ENCODE measurements at regions of chr12 and their contacts with region 1.

Region 1: DNA sequence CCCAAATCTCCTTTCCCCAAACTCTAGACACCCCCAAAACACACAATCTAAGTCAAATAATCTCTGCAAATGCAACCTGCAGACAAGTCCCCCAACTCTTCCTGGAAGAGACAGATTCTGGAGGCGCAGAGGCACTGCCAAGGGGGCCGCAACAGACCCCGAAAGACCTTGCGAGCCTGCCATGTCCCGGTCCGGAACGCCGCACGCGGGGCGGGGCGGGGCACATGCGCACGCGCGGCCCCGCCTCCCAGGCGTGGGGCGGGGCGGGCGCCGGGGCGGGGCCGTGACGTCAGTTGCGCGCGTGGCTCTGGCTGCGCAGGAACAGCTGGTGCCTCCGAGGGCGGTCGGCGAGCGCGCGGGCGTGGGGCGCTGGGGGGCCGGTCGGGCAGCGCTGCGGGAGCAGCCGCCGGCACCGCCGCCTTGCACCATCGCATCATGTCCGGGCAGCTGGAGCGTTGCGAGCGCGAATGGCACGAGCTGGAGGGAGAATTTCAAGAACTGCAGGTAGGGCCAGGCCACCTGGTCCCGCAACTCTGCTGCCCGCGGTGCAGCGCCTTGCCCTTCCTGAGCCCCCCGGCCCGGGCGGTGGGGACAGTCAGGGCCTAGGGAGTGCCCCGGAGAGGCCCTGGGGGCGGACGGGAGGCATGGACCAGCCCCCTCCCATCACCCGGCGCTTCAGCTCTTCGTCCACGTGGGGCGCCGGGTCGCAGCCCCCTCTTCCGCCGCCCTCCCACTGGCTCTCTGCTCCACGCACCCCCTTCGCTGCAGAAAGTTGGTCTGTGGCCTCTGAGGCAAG is at the start of gene TMEM120B:
- DNase-seq: peak; percentile 80 to 89
- ATAC-seq: peak; percentile 91 to 98 (median 95)
- H3K4me3 ChIP-seq: peak within 1 kb of the TSS; percentile 71 to 98 (median 94)
- H3K27ac ChIP-seq: peak within 1 kb of the TSS; percentile 85 to 96 (median 91)
- H3K4me1 ChIP-seq: peaks cover 8 to 27% (median 17%) of the 10 kb centered on the region in 9 donors
- H3K27me3 ChIP-seq: no peaks in the 10 kb centered on the region
- CTCF ChIP-seq: no peak
- total RNA-seq, gene TMEM120B: 5.3 to 12.3 (median 7.3) TPM

Region 2: DNA sequence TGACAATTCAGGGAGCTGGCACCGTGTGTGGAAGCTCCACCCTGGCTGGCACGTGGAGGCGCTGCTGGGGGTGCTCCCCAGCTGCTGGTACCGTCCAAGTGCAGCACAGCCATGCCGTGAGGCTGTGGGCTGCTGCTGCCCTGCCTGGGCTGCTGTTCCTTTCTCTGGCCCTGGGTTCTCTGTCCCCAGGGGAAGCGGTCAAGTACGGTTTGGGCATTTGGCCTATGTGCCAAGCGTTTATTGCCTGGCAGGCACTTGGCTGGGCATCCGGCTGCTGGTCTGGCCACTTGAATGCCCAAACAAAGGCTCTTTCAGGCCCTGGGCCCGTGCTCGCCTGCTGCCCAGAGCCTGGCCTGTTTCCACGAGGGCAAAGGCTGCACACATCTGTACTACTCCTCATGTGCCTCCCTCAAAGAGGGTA is 41.2 kb after region 1 on chr12:
- intact Hi-C with region 1: loop called in 2 of 10 experiments (anchors 5 kb)
- DNase-seq: peak; percentile 64 to 71
- ATAC-seq: peak; percentile 73 to 93 (median 90)
- H3K4me3 ChIP-seq: no peak overlapping the region
- H3K27ac ChIP-seq: peak overlapping the region in 9 of 10 donors; percentile 60 to 78 (median 67)
- H3K4me1 ChIP-seq: peaks cover 0 to 23% (median 7%) of the 10 kb centered on the region in 9 donors
- H3K27me3 ChIP-seq: no peaks in the 10 kb centered on the region
- CTCF ChIP-seq: no peak

Region 3: DNA sequence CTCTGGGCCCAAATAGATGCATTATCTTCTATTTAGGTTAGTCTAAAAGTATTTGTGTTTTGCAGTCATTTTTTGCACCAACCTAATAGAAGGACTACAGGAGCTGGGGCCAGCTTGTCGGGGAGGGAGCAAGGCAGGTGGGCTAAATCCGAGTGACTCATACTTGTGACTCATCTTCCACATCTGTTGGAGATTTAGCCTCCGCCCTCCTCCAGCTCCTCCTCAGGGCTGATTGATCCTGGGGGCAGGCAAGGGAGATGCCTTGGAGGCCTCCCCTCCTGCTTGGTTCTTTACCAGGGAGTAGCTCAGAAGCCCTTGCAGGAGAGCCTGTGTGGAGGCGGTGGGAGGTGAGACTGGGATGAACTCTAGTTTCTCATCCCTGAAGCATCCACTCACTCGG is 52.9 kb after region 1 on chr12:
- intact Hi-C with region 1: loop called in 5 of 10 experiments (anchors 2 to 5 kb)
- DNase-seq: no peak
- ATAC-seq: no peak
- H3K4me3 ChIP-seq: no peak overlapping the region
- H3K27ac ChIP-seq: no peak overlapping the region
- H3K4me1 ChIP-seq: peaks cover 15 to 51% (median 31%) of the 10 kb centered on the region in 9 donors
- H3K27me3 ChIP-seq: no peaks in the 10 kb centered on the region
- CTCF ChIP-seq: no peak

Region 4: DNA sequence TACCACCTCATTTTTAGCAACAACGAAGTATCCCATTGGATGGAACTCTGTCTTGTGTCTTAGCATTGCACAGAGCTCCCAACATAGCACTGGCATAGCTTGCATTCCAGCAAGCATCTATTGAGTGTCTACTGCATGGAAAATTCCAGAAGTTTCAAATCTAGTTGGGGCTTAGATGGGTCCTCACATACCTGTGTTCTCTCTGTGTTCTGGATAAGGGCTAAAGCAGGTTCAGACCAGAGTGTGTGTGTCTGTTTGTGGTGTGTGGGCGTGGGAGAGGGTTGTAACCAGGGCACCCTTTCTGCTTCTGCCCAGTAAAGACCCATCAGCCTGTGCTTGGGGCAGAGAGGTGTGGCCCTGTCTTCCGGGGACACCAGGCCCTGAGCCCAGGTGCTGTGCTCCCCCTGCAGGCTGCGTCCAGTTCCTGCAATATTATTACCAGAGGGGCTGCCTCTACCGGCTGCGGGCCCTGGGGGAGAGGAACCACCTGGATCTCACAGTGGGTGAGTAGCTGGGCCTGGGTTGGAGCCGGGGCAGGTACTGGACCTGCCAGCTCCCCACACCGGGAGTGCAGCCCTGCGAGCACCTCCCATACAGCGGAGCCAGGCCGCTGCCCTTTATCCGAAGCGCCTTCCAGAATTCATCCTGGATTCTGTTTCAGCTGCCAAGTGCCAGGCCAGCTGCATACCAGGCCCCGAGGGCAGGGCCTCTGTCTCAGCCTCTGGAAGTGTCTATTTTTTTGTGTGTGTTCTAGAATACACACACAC is 60.5 kb after region 1 on chr12:
- intact Hi-C with region 1: loop called in 5 of 10 experiments (anchors 2 to 5 kb)
- DNase-seq: peak; percentile 64 to 70
- ATAC-seq: peak; percentile 56 to 78 (median 68)
- H3K4me3 ChIP-seq: peak overlapping the region in 1 of 10 donors; percentile 11
- H3K27ac ChIP-seq: peak overlapping the region in 9 of 10 donors; percentile 31 to 80 (median 72)
- H3K4me1 ChIP-seq: peaks cover 4 to 68% (median 29%) of the 10 kb centered on the region in 9 donors
- H3K27me3 ChIP-seq: no peaks in the 10 kb centered on the region
- CTCF ChIP-seq: peak; percentile 54 to 87 (median 79)

Region 5: GRCh38 chr12:121888478-121889266 is 176.0 kb after region 1 on chr12 and contains the start of gene PSMD9:
- intact Hi-C with region 1: loop called in 2 of 10 experiments (anchors 10 kb)
- DNase-seq: peak; percentile 98
- ATAC-seq: peak; percentile 99 to 100 (median 99)
- H3K4me3 ChIP-seq: peak within 1 kb of the TSS; percentile 62 to 99 (median 92)
- H3K27ac ChIP-seq: peak within 1 kb of the TSS; percentile 79 to 98 (median 96)
- H3K4me1 ChIP-seq: peaks cover 8 to 31% (median 24%) of the 10 kb centered on the region in 9 donors
- H3K27me3 ChIP-seq: no peaks in the 10 kb centered on the region
- CTCF ChIP-seq: peak; percentile 35 to 79 (median 66)
- total RNA-seq, gene PSMD9: 29.3 to 39.9 (median 34.4) TPM

Measured in heart right ventricle (tissue), 16 donors.